Body of pancreas (tissue), 4 donors: ENCODE measurements at regions of chr7 and their contacts with region 1.

Region 1: DNA sequence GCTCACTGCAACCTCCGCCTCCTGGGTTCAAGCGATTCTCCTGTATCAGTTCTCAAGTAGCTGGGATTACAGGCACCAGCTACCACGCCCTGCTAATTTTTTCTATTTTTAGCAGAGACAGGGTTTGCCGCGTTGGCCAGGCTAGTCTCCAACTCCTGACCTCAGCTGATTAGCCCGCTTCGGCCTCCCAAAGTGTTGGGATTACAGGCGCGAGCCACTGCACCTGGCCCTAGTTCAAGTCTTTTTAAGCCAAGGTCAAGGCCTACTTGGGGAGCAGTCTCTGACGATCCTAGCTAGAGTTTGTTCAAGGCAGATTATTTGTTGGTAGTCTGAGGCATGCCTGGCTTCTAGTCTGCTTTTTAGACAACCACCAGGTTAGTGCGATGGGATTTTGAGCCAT is 709.5 kb upstream of the COBL start:
- DNase-seq: no peak
- ATAC-seq: no peak
- H3K4me3 ChIP-seq: no peak overlapping the region
- H3K27ac ChIP-seq: no peak overlapping the region
- H3K4me1 ChIP-seq: no peaks in the 10 kb centered on the region
- H3K27me3 ChIP-seq: no peaks in the 10 kb centered on the region
- CTCF ChIP-seq: no peak
- POLR2A ChIP-seq: no peak

Region 2: DNA sequence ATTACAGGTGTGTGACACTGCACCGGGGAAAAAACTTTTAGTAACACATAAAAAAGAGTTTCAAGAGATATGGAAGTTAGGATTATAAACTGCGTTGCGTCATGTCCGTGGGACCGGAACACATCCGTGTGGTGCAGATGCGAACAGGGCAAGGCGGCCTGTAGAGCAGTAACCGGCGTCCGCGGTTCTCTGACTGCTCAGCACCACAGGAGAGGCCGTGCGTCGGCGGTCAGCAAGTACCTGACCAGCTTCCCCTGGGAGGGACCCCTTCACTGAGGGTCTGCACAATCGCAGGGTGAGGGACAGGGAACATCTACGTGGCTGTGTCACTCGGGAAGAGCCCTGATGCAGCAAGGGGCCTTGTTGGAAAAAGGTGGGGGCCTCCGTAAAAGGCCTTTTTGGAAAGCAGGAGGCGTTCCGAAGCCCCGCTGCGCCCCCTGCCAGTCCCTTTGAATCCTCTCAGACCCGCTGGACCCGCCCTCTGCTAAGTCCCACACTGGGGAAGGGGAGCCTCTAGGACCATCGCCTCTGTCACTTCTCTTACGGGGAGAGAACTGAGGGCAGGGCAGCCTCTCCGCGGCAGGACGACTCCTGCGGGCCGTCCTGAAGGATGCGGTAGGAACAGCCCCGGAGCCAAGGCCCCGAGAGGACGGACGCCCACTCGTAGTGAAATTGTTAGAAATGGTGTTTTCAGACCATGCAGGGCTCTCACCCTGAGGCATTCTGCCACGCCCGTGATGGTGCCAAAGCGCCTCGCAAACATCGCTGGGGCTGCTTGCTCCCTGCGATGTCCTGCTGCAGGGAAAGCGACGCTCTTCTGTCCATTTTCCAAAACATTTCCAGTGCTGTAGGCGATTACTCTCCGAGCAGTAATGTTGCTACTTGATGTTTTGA is 62.1 kb after region 1 on chr7:
- intact Hi-C with region 1: loop called (anchors 10 kb)
- DNase-seq: no peak
- ATAC-seq: no peak
- H3K4me3 ChIP-seq: no peak overlapping the region
- H3K27ac ChIP-seq: no peak overlapping the region
- H3K4me1 ChIP-seq: peaks cover 7% of the 10 kb centered on the region
- H3K27me3 ChIP-seq: no peaks in the 10 kb centered on the region
- CTCF ChIP-seq: no peak
- POLR2A ChIP-seq: no peak